ENCODE measurements at regions of chr16 and their contacts with region 1.

Region 1: DNA sequence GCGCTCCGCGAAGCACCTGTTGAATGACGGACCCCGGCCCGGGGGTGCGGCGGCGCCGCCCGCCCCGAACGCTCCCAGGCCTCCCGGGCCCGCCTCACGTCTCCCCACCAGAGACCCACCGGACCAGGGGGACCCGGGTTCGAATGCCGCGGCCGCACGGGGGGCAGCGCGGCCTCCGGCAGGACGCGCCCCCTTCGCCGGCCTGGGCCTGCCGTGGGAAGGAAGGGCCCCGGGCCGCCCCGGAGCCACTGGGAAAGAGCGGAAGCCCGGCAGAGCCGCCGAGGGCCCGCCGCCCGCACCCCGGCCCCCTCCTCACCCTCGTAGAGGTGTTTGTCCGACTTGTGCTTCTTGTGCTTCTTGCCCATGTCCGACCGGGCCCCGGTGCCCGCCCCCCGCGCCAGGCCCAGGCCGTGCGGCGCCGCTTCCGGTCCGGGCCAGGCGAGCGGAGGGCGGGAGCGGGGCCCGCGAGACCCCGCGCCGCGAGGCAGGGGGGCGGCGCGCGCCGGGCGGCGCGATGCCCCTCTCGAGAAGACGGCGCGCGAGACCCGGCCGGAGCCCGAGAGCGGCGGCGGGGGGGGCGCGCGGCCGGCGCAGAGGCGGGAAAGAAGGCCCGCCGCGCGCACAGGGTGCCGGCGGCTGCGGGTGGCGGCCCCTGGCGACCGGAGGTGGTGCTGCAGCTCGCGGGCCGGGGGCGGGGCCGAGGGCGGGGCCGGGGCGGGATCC is at the start of gene BRD7:
- DNase-seq: peak; percentile 89
- H3K4me3 Mint-ChIP-seq: peak within 1 kb of the TSS; percentile 92
- H3K27ac Mint-ChIP-seq: peak within 1 kb of the TSS; percentile 91
- H3K4me1 Mint-ChIP-seq: peaks cover 41% of the 10 kb centered on the region
- H3K27me3 Mint-ChIP-seq: peaks cover 3% of the 10 kb centered on the region
- total RNA-seq, gene BRD7: 92.7 and 98.8 TPM in 2 replicates

Region 2: GRCh38 chr16:50024684-50025536 is 343.7 kb before region 1 on chr16 and contains the start of gene CNEP1R1:
- intact Hi-C with region 1: loop called (anchors 2 kb)
- DNase-seq: peak; percentile 98
- H3K4me3 Mint-ChIP-seq: peak within 1 kb of the TSS; percentile 97
- H3K27ac Mint-ChIP-seq: peak within 1 kb of the TSS; percentile 88
- H3K4me1 Mint-ChIP-seq: peaks cover 17% of the 10 kb centered on the region
- H3K27me3 Mint-ChIP-seq: peaks cover 11% of the 10 kb centered on the region
- total RNA-seq, gene CNEP1R1: 22.3 and 23.0 TPM in 2 replicates

Region 3: GRCh38 chr16:50266337-50267091 is 102.1 kb before region 1 on chr16 and contains the start of gene ADCY7:
- intact Hi-C with region 1: loop called (anchors 5 kb)
- DNase-seq: peak; percentile 95
- H3K4me3 Mint-ChIP-seq: peak within 1 kb of the TSS; percentile 96
- H3K27ac Mint-ChIP-seq: peak within 1 kb of the TSS; percentile 96
- H3K4me1 Mint-ChIP-seq: peaks cover 60% of the 10 kb centered on the region
- H3K27me3 Mint-ChIP-seq: no peaks in the 10 kb centered on the region
- total RNA-seq, gene ADCY7: 85.6 and 86.2 TPM in 2 replicates

Region 4: DNA sequence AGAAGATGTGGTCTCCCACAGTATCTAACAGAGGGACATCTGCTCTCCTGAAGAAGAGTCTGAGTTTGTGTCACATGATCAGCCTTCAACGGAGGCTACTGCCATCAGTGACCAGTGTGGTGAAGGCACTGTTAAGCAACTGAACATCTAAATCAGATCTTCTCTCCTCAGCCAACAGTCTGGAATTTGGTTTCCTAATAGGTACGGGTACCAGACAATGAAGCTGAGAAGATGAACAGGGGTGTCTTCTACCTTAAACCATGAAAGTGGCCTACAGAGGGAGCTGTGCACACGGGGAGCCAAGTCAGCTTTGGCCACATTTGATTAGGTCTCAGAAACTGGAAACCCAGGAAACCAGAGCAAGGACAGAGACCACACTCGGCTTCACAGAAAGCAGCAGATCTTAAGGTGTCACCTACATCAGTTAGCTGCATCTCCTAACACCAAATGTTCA is 41.6 kb before region 1 on chr16:
- intact Hi-C with region 1: loop called (anchors 2 kb)
- DNase-seq: peak; percentile 92
- H3K4me3 Mint-ChIP-seq: peak overlapping the region; percentile 13
- H3K27ac Mint-ChIP-seq: peak overlapping the region; percentile 61
- H3K4me1 Mint-ChIP-seq: peaks cover 40% of the 10 kb centered on the region
- H3K27me3 Mint-ChIP-seq: no peaks in the 10 kb centered on the region

Region 5: DNA sequence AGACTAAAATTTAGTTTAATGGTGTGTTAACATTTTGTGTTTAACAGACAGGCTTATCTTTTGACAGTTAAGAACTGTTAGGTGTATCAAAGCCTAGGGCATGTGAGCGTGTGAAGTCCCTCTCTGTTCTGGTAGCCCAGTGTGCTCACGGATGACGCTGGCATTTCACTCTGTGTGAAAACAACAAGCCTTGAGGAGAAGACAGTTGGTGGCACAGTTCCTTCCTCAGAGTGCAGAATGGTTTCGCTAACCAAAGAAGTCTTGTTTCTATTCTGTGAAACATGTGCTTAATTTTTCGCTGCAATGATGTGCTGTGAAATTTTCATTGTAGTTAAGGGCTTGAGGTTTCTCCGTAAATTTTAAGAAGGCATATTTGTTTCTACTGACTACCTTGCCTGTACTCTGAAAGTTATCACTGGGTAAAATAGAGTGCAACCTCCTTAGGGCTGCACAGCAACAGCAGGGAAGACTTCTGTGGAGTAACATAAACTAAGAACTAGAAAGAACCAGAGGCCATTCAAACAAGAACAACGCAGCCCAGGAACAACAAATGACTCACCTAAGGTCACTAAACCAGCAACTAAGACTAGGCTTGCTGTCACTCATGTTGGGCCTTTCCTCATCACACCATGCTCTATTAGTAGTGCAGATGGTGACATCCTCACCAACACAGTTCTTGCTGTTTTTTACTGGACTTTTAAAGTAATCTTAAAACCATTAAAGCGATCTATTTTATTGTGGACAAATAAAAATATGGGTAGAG is 33.2 kb before region 1 on chr16:
- intact Hi-C with region 1: loop called (anchors 2 kb)
- DNase-seq: peak; percentile 73
- H3K4me3 Mint-ChIP-seq: no peak overlapping the region
- H3K27ac Mint-ChIP-seq: peak overlapping the region; percentile 83
- H3K4me1 Mint-ChIP-seq: peaks cover 26% of the 10 kb centered on the region
- H3K27me3 Mint-ChIP-seq: no peaks in the 10 kb centered on the region

Region 6: DNA sequence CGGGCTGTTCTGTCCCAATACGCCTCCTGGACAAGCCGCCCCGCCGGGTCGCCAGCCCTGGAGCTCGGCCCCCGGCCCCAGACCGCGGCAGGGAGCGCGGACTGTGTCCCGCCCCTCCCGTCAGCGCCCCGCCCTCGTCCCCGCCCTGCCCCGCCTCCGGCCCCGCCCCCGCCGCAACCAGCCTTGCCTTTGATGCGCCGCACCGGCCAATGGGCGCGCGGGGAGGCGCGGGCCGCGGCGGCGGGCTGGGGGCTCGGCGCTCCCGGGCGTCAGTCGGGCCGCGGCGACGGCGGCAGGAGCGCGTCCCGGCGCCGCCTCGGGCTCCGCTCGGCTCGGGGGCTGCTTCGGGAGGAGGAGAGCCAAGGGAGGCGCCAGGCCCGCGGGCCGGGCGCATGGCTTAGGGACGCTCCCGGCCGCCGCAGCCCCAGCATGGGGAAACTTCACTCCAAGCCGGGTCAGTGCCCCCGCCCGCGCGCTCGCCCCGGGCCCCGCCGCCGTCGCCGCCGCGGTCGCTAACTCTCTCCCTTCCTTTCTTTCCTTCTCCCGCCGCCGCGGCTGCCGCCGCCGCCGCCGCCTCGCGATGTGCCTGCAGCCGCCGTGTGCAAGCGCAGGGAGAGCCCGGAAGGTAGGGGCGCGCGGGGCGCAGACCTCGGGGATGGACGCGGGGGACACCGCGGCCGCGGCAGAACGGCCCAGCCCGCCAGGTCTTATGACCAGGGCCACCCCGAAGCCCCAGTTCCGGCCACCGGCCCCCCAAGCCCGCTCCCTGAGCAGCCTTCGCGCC is 179.7 kb after region 1 on chr16 and contains the start of gene NKD1:
- intact Hi-C with region 1: loop called (anchors 1 kb)
- DNase-seq: peak; percentile 92
- H3K4me3 Mint-ChIP-seq: peak within 1 kb of the TSS; percentile 89
- H3K27ac Mint-ChIP-seq: peak within 1 kb of the TSS; percentile 64
- H3K4me1 Mint-ChIP-seq: peaks cover 8% of the 10 kb centered on the region
- H3K27me3 Mint-ChIP-seq: peaks cover 57% of the 10 kb centered on the region
- total RNA-seq, gene NKD1: 0.77 and 1.7 TPM in 2 replicates

Region 7: DNA sequence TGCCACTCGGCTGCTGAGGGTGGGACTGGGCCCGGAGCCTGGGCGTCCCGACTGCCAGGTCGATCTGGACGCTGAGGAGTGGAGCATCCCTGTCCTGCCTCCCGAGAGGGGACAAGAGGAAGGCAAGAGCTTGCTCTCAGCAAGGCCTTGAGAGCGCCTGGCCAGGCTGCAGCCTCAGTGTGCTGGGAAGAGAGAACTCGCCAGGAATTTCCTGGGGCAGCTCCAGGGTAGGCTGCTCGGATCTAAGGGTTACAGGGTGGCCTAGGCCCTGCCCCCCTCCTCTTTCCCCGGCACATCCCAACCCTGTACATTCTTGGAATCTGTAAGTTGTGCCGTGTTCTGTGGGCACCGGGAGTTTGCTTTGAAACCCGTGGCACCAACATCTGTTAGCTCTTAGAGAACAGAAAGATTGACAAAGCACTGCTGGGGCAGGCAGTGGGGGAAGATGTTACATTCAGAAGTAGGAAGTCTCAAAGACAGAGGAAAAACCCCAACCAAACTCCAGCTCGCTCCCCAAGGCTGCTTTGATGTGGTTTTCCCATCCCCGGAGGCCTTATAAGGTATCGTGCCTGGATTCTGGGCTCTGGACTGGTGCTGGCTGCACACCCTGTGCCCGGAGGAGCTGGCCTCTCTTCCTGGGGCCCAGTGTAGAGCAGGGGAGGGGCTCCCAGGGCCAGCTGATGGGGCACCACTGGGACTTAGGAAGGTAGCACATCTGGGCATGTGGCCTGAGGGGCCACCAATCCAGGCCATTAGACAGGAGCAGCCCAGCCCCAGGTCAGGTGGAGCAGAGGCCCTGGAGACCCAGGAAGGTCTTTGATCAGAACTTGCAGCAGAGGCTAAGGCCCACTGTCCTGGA is 234.9 kb after region 1 on chr16:
- intact Hi-C with region 1: no loop called
- DNase-seq: no peak
- H3K4me3 Mint-ChIP-seq: no peak overlapping the region
- H3K27ac Mint-ChIP-seq: no peak overlapping the region
- H3K4me1 Mint-ChIP-seq: peaks cover 15% of the 10 kb centered on the region
- H3K27me3 Mint-ChIP-seq: no peaks in the 10 kb centered on the region

Region 8: GRCh38 chr16:50932348-50932916 is 563.9 kb after region 1 on chr16:
- intact Hi-C with region 1: no loop called
- DNase-seq: no peak
- H3K4me3 Mint-ChIP-seq: no peak overlapping the region
- H3K27ac Mint-ChIP-seq: no peak overlapping the region
- H3K4me1 Mint-ChIP-seq: no peaks in the 10 kb centered on the region
- H3K27me3 Mint-ChIP-seq: no peaks in the 10 kb centered on the region

Measured in activated CD4-positive, alpha-beta T cell treated with anti-CD3 and anti-CD28 coated beads, Interleukin-2, amount 10 ng/mL, durations not matched to agents 24 days and 14 days (primary cell).